Cardiac septum (tissue), 1 donor: ENCODE measurements at regions of chr14 and their contacts with region 1.

Region 1: DNA sequence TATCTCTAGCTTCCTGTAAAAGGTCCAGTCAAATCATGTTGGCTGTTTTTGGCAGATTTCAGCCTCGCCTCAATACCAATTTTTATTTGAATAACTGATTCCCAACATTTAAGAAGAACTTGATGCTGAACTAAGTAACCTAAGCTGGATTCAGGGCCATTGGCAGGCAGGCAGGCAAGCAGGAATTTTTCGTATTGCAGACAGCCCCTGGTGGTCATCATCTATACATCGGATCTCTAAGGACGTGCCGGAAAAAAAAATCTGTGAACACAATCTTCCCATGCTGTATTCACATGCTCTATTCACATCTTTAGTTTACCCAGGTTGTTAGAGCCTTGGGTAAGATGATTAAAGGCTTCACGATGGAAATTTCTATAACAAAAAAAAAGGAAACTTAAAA is 7.0 kb downstream of the VCPKMT start:
- DNase-seq: no peak

Region 2: DNA sequence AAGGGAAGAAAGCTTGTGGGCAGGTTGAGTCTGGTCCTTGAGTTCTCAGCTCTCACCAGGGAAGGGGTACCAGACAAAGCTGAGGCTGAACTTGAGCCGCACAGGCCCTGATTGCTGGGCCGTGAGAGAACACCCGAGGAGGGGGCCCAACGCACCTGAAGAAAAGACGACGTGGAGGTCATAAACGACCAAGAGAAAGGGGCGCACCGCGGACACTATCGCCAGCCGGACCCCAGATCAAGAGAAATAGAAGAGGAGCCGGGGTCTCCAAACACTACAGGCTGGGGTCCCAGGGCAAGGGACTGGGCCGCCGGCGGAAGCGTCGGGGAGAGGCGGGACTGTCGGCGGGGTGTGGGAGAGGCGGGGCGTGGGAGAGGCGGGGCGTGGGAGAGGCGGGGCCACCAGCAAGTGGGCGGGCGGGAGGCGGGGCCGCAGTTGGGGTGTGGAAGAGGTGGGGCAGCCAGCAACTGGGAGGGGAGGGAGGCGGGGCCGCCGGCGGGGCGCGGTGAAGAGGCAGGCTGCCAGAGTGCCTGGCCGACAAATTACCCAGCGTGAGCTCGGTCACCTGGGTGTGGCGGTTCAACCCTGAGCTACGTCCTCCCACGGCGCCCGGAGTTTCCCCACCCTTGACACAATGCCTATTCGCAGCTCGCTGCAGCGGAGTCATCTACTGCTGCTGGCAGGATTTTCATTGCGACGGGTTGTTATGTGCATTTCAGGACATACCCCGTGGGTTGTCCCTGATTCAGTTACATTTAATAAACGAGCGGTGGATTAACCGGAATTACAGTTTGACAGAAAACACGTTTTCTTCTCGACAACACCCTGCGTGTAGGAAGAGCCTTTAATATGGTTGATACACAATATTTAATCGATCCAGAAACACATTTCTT is 241.3 kb before region 1 on chr14:
- intact Hi-C with region 1: loop called (anchors 5 kb)
- DNase-seq: peak; percentile 99